ENCODE measurements at regions of chr15 and their contacts with region 1.

Region 1: DNA sequence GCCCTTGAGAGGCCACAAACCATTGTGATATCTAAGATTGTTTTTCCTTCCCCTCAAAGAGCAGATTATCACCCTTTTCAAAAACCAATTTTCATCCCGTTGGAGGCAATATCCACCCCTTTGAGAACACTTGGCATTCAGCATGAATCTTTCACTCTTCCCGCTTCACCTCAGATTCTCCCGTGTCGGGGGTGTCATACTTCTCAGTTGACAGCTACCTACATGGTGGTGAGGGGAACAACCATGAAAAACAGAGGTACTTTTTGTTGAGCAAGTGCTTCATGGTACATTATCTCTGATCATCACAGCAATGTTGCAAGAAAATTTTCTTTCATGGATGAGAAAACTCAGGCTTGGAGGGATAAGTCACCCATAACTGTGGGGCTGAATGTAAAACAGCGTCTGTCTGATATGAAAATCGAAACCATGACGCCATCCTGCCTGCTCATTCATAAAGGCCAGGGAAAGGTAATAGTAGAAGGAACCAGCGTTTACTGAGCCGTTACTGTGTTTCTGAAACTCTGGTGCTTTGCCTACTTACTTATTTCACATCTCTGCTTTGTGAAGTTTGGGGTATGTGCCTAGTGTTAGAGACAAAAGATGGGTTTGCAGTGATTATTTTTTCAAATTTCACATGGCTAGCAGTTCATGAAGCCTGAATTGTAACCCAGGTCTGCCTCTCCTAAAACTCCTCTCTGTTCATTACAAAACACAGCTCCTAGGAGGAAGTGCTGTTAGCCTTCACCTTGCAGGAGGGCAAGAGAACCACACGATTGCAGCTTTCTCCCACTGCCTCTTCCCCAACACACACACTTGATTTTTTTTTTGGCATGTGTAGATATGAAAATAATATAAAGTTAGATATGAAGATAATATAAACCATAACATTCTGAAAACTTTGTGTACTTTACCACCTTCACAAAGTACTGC is 35.4 kb downstream of the SV2B start:
- DNase-seq: no peak
- ATAC-seq: no peak
- H3K4me3 ChIP-seq: no peak overlapping the region
- H3K27ac ChIP-seq: no peak overlapping the region
- H3K4me1 ChIP-seq: no peaks in the 10 kb centered on the region
- H3K27me3 ChIP-seq: peaks cover 0 to 12% (median 0%) of the 10 kb centered on the region in 7 donors
- CTCF ChIP-seq: no peak

Region 2: DNA sequence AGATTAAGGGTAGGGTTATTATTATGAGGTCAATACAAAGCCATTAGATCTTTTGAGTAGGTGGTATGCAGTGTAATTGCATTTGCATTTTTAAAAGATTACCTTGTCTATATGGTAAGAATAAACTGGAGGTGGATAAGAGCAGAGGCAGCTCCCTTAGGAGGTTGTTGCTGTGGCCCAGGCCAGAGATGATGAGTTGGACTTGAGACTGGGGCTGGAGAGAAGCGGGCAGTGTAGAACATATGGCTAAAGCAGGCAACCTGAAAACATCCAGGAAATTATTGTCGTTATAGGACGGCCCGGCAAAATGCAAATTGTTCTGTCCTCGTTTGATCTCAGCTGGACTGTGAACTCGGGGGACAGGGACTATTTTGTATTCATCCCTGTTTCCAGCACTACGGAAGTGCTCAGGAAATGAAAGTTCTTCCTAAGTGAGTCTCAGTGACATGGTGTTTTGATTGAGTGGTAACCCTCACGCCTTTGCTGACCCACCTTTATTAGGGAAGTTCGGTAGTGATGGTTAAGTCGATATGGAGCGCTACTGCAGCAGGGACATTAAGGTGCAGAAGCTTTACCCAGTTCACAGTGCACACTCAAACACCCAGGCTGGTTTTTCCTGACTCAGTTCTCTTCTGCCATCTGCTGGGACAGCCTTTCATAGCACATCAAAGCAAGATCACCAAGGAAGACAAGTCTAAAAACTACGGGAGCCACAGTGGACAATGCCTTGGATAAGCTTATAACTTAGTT is 85.9 kb before region 1 on chr15:
- intact Hi-C with region 1: loop called in 2 of 10 experiments (anchors 10 kb)
- DNase-seq: peak in 1 of 2 donors; percentile 48
- ATAC-seq: peak; percentile 58 to 90 (median 86)
- H3K4me3 ChIP-seq: no peak overlapping the region
- H3K27ac ChIP-seq: no peak overlapping the region
- H3K4me1 ChIP-seq: peaks cover 0 to 12% (median 0%) of the 10 kb centered on the region in 9 donors
- H3K27me3 ChIP-seq: peaks cover 0 to 15% (median 6%) of the 10 kb centered on the region in 7 donors
- CTCF ChIP-seq: peak; percentile 32 to 74 (median 65)